Dendritic cell treated with granulocyte-macrophage colony-stimulating factor and Interleukin-4, amounts not matched to agents 40 ng/mL and 50 ng/mL, for 4 days (primary cell): ENCODE measurements at regions of chrX and their contacts with region 1.

Region 1: DNA sequence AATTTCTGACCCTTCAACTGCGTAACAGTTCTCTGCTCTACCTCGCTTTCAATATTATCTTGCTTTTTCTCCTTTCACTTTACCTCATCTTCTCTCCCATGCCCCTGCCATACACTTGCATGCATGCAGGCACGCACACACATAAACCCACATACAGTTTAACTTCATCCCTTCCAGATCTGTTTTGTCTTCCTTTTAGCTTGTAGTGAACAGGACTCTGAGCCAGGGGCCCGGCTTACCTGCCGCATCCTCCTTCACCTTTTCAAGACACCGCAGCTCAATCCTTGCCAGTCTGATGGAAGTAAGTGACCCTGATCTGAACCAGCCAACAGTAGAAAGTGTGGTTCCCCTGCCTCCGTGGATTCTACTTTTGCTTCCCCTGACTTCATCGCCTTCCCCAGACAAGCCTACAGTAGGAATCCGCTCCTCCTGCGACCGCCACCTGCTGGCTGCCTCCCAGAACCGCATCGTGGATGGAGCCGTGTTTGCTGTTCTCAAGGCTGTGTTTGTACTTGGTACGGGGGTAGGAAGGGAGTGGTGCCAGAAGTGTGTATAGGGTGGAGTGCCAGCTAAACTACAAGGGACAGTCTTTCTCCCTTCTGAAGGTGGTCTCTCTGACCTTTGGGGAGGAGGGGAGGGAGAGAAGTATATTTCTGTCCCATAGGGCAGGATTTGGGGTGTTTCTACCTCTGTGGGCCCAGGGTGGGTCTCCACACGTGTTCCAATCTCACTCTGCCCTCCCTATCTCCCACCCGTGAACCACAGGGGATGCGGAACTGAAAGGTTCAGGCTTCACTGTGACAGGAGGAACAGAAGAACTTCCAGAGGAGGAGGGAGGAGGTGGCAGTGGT is 10.7 kb downstream of the MED12 start:
- H3K4me3 Mint-ChIP-seq: no peak overlapping the region
- H3K27ac Mint-ChIP-seq: peak overlapping the region; percentile 67
- H3K4me1 Mint-ChIP-seq: peaks cover 30% of the 10 kb centered on the region
- H3K27me3 Mint-ChIP-seq: no peaks in the 10 kb centered on the region

Region 2: DNA sequence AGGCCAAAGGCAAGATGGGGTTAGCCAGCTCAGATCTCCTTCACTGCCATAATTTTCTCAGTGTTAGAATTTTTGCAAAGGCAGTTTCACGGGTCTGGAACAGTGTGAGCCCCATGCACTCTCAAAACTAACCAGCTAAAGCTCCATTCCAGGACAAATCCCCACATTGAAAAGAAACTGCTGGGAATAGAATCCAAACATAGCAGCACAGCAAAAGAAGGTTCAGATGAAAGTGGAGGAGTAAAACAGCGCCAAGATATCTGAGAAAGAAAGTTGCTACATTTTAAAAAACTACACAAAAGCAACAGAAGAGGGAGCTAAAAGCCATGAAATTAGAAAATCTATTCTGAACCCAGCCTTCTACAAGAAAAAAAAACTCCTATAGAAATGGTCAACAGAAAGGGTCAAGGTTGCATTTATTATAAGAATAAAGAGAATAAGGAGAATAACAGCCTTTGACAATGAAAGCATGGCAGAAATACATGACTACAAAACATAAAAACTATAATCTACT is 158.6 kb before region 1 on chrX:
- intact Hi-C with region 1: loop called (anchors 1 kb)
- H3K4me3 Mint-ChIP-seq: no peak overlapping the region
- H3K27ac Mint-ChIP-seq: no peak overlapping the region
- H3K4me1 Mint-ChIP-seq: no peaks in the 10 kb centered on the region
- H3K27me3 Mint-ChIP-seq: no peaks in the 10 kb centered on the region

Region 3: DNA sequence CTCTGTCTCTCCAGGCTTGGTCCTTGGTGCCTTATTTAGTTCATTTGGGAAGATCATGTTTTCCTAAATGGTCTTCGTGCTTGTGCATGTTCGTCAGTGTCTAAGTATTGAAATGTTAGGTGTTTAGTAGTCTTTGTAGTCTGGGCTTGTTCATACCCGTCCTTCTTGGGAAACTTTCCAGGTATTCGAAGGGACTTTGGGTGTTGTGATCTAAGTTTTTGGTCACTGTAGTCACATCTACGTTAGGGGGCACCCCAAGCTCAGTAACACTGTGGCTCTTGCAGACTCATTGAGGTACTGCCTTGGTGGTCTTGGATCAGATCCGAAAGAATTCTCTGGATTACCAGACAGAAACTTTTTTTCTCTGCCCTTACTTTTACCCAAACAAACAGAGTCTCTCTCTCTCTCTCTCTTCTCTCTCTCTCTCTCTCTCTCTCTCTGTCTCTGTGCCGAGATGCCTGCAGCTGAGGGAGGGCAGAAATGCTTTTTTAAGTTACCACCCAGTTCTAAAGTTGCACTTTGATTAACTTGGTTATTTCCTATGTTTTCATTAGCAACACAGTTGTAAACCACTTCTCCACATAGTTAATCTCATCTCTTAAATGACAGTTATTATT is 130.6 kb before region 1 on chrX:
- intact Hi-C with region 1: loop called (anchors 5 kb)
- H3K4me3 Mint-ChIP-seq: no peak overlapping the region
- H3K27ac Mint-ChIP-seq: no peak overlapping the region
- H3K4me1 Mint-ChIP-seq: peaks cover 7% of the 10 kb centered on the region
- H3K27me3 Mint-ChIP-seq: peaks cover 2% of the 10 kb centered on the region

Region 4: DNA sequence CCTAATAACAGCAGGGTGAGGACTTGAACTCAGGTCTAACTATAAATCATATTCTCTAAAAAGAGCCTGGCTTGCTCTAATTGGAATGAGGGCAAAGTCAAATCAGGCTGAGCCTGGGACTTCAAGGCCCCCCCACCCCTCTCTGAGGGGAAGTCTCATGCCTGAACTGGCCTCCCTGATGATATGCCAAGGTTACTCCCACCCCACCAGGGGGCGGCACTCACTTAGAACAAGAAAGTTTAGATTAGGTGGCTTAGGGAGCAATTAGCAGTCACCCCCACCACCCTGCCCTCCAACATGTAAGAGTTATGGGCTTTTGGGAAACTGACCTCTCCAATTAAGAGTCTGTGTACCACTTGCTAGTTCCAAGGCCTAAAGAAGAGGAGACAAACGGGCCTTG is 30.8 kb before region 1 on chrX:
- intact Hi-C with region 1: loop called (anchors 1 kb)
- H3K4me3 Mint-ChIP-seq: no peak overlapping the region
- H3K27ac Mint-ChIP-seq: no peak overlapping the region
- H3K4me1 Mint-ChIP-seq: peaks cover 19% of the 10 kb centered on the region
- H3K27me3 Mint-ChIP-seq: peaks cover 4% of the 10 kb centered on the region

Region 5: DNA sequence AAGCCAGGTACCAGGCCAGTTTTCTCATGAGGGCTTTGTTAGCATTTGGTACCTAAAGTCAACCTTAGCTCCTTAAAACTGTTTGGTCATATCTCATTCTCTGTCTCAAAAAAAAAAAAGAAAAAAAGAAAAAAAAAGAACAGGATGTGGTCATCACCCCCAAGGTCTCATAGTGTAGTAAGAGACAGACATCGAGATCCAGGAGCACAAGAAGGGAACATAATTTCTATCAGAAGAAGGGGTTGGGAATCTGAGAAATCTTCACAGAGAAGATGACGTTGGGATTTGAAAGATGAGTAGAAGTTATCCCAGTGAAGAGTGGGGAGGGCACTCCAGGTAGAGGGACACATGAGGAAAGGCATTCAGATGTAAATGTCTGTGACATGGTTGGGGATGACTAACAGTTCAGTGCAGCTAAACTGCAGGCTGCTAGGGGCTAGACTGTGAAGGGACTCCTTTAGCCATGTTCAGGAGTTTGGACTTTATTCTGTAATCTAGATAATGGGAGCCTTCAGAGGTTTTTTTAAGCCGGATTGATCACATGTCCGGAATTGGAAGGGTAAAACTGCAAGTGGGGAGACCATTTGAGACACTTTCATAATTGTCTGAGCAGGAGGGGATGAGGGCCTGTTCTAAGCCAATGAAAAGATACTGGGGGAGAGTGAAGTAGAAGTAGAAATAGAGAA is 67.0 kb after region 1 on chrX:
- intact Hi-C with region 1: no loop called
- H3K4me3 Mint-ChIP-seq: peak overlapping the region; percentile 70
- H3K27ac Mint-ChIP-seq: peak overlapping the region; percentile 81
- H3K4me1 Mint-ChIP-seq: peaks cover 42% of the 10 kb centered on the region
- H3K27me3 Mint-ChIP-seq: no peaks in the 10 kb centered on the region